Activated naive CD4-positive, alpha-beta T cell treated with anti-CD3 and anti-CD28 coated beads, Interleukin-2, amount 10 ng/mL, durations not matched to agents 7 days and 5 days (primary cell): ENCODE measurements at regions of chr1 and their contacts with region 1.

Region 1: GRCh38 chr1:16946646-16947045 is 24.9 kb downstream of the CROCC start:
- DNase-seq: no peak
- H3K4me3 Mint-ChIP-seq: no peak overlapping the region
- H3K27ac Mint-ChIP-seq: no peak overlapping the region
- H3K4me1 Mint-ChIP-seq: no peaks in the 10 kb centered on the region
- H3K27me3 Mint-ChIP-seq: peaks cover 4% of the 10 kb centered on the region

Region 2: DNA sequence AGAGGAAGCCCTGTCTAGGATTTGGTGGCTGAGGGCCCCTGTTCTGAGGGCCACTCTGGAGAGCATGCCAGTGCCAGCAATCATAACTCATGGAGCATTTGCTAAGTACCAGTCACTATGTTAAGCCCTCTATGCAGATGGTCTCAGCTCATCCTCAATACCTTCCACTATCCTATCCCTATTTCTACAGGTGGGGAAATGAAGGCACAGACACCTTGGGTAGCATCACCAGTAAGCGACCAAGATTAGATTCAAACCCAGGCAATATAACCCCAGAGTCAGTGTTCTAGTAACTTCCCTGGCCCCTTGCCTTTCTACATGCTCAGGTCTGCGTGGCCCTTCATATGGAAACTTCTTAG is 325.4 kb before region 1 on chr1:
- CTCF ChIA-PET with region 1: interaction called, 27 read pairs
- DNase-seq: no peak
- H3K4me3 Mint-ChIP-seq: no peak overlapping the region
- H3K27ac Mint-ChIP-seq: no peak overlapping the region
- H3K4me1 Mint-ChIP-seq: no peaks in the 10 kb centered on the region
- H3K27me3 Mint-ChIP-seq: no peaks in the 10 kb centered on the region

Region 3: GRCh38 chr1:16960560-16961296 is 14.1 kb after region 1 on chr1:
- CTCF ChIA-PET with region 1: interaction called, 10 read pairs
- DNase-seq: peak; percentile 90
- H3K4me3 Mint-ChIP-seq: peak overlapping the region; percentile 60
- H3K27ac Mint-ChIP-seq: peak overlapping the region; percentile 64
- H3K4me1 Mint-ChIP-seq: peaks cover 14% of the 10 kb centered on the region
- H3K27me3 Mint-ChIP-seq: no peaks in the 10 kb centered on the region

Region 4: GRCh38 chr1:17045634-17046333 is 99.1 kb after region 1 on chr1:
- CTCF ChIA-PET with region 1: interaction called, 18 read pairs
- DNase-seq: no peak
- H3K4me3 Mint-ChIP-seq: no peak overlapping the region
- H3K27ac Mint-ChIP-seq: peak overlapping the region; percentile 61
- H3K4me1 Mint-ChIP-seq: peaks cover 16% of the 10 kb centered on the region
- H3K27me3 Mint-ChIP-seq: no peaks in the 10 kb centered on the region